HAP-1 (cell line): ENCODE measurements at regions of chr9 and their contacts with region 1.

Region 1: GRCh38 chr9:69919461-69920061 is 98.9 kb downstream of the CFAP95 start:
- DNase-seq: peak; percentile 17 to 62
- H3K4me3 ChIP-seq: no peak overlapping the region
- H3K4me1 ChIP-seq: no peaks in the 10 kb centered on the region; the same call in 1 of the 2 replicates
- H3K27me3 ChIP-seq: 0 out of 2 replicates have a peak, but pooled peaks cover 2% of the 10 kb centered on the region

Region 2: DNA sequence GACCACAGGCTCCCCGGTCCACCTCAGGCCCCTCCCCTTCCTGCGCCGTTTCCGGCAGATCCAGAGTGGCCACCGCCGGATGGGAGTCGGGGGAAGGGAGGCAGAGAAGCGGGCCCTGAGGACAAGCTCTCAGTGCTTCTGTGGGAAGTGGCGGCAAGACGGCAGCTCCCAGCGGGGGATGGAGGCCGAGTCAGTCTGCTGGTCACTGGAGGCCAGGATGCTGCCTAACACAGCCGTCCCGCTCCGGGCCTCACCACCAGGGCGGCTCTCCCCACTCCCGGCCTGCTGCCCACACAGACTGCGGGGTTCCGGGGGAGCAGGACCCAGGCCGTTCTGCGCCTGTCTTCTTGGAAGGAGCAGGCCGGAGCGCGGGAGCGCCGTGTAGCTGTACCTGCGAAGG is 852.6 kb before region 1 on chr9:
- in situ Hi-C with region 1: loop called (anchors 25 kb)
- DNase-seq: no peak
- H3K4me3 ChIP-seq: no peak overlapping the region
- H3K4me1 ChIP-seq: peaks cover 9% of the 10 kb centered on the region
- H3K27me3 ChIP-seq: no peaks in the 10 kb centered on the region

Region 3: GRCh38 chr9:69421908-69422801 is 497.4 kb before region 1 on chr9:
- in situ Hi-C with region 1: loop called (anchors 10 kb)
- DNase-seq: peak; percentile 43 to 74
- H3K4me3 ChIP-seq: no peak overlapping the region
- H3K4me1 ChIP-seq: 0 out of 2 replicates have a peak, but pooled peaks cover 2% of the 10 kb centered on the region
- H3K27me3 ChIP-seq: no peaks in the 10 kb centered on the region